ENCODE measurements at regions of chr11 and their contacts with region 1.

Region 1: DNA sequence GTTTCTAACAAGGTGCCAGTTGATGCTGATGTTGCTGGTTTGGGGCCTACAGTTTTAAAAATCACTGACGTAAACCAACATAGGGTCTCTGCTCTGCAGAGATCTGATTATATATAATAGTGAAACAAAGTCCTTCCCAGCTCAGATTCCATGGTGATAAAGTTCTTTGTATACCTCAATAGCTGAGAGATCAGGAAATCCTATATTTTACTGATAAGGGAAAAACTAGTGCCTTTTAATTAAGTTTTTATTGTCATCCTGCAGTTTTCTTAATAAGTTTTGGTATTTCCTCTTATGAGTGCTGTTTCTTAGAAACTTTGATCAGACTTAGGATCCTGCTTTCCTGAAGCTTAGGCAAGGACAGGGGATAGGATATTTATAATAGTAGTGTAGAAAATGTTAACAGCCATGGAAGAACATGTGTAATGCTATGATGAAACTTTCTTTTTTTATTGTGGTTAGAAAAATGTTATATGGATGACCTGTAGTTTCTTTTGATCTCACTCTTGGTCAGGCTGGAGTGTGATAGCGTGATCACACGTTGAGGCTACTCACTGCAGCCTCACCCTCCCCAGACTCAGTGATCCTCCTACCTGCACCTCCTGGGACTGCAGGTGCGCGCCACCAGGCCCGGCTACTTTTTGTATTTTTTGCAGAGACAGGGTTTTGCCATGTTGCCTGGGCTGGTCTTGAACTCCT is 14.1 kb downstream of the CAPRIN1 start:
- DNase-seq: peak; percentile 64
- H3K4me3 ChIP-seq: no peak overlapping the region
- H3K27ac ChIP-seq: peak overlapping the region; percentile 34
- H3K4me1 ChIP-seq: peaks cover 87% of the 10 kb centered on the region
- H3K27me3 ChIP-seq: no peaks in the 10 kb centered on the region
- CTCF ChIP-seq: peak; percentile 26; the same call in 1 of the 2 replicates

Region 2: GRCh38 chr11:34105079-34105956 is 39.7 kb after region 1 on chr11 and contains the start of gene NAT10:
- CTCF ChIA-PET with region 1: no interaction called
- POLR2A ChIA-PET with region 1: interaction called, 10 read pairs
- intact Hi-C with region 1: no loop called
- DNase-seq: peak; percentile 100
- H3K4me3 ChIP-seq: peak within 1 kb of the TSS; percentile 55
- H3K27ac ChIP-seq: peak within 1 kb of the TSS; percentile 93
- H3K4me1 ChIP-seq: peaks cover 42% of the 10 kb centered on the region
- H3K27me3 ChIP-seq: no peaks in the 10 kb centered on the region
- CTCF ChIP-seq: peak; percentile 30; the same call in 1 of the 2 replicates
- total RNA-seq, gene NAT10: 180 and 192 TPM in 2 replicates

Measured in A673 (cell line).